ENCODE measurements at regions of chr1 and their contacts with region 1.

Region 1: DNA sequence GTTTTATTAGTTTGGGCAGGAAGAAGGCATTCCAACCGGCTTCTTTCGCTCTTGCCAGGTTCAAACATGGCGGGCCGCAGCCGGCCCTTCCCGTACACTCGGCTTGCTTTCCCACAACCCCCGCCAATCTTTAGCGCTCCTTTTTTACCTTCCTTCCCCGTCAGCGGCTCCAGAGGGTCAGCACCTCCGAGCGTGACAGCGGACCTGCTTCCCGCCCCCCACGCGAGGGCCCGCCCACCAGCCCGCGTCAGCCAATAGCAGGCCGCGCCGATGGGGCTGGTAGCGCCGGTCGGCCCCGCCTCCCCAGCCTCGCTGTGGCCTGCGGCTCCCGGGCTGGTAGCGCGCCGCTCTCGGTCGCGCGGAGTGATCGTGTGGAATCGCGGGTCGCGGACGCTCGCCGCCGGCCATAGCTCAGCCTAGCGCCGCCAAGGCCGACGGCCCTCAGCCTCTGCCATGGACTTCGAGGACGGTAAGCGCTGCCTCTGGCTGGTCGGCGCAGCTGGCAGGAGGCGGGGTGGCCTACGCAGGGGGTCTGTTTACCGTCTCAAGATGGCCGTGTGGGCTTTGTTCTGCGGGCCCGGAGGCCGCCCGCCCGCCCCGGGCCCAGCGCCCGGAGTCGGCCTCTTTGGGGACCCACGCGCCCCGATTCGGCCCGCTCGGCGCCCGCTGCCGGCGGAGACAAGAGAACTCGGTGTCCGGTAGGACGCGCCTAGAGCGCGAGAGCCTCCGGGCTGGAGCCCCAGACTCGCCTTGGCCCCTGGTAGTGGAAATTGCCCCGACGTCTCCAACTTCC is at the start of gene ZNF326:
- DNase-seq: peak; percentile 96 to 98 (median 96)
- ATAC-seq: peak; percentile 97 to 99 (median 99)
- H3K4me3 ChIP-seq: peak within 1 kb of the TSS; percentile 66 to 97 (median 91)
- H3K27ac ChIP-seq: peak within 1 kb of the TSS; percentile 86 to 98 (median 96)
- H3K4me1 ChIP-seq: peaks cover 0 to 40% (median 26%) of the 10 kb centered on the region in 12 donors
- H3K27me3 ChIP-seq: no peaks in the 10 kb centered on the region
- CTCF ChIP-seq: peak in 2 of 12 donors; percentile 18 to 31
- POLR2A ChIP-seq: peak; percentile 86 to 96
- total RNA-seq, gene ZNF326: 4.9 to 14.7 (median 10.1) TPM

Region 2: DNA sequence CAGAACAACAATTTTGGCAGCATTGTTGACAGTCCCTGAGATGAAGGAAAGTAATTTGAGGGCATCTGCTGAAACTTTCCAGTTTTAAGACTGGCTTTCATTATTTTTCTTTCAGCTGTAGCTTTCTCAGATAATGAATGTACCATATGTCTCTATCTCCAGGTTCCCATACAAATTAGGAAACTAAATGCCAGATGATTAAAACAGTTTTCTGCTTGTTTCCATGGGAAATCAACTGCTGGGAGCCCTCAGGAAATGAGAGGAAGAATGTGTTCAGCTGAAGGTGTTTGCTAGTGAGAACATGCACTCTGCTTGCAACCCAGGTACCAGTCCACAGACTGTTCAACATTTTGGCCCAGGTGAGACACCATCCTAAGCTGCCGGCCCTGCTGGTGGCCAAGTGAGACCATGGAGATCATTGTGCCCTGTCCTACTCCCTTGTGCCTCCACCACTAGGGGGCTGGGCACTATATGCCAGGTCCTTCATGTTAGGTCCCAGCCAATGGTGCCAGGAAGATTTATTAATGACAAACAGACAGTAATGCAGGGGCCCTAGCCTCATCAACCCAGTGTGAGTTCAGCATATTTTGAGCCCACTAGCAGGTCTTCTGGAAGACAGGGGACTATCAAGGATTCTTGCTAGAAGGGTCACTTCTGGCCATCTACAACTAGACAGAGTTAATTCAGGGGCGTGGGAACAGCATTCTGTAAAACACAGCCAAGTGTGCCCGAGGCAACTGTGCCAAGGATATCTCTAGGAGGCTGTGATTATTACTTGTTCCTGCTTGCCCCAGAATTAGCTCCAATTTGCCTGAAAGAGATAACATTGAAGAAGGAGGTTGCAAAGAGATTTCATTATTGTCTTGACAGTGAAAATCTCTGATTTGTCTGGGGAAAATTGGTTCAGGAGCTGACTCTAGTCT is 379.1 kb before region 1 on chr1:
- intact Hi-C with region 1: loop called in 1 of 10 experiments (anchors 10 kb)
- DNase-seq: no peak
- ATAC-seq: peak; percentile 51 to 76 (median 66)
- H3K4me3 ChIP-seq: no peak overlapping the region
- H3K27ac ChIP-seq: peak overlapping the region; percentile 43 to 80 (median 64)
- H3K4me1 ChIP-seq: peaks cover 9 to 38% (median 28%) of the 10 kb centered on the region in 12 donors
- H3K27me3 ChIP-seq: no peaks in the 10 kb centered on the region
- CTCF ChIP-seq: peak; percentile 13 to 48 (median 38)
- POLR2A ChIP-seq: no peak